ENCODE measurements at regions of chr6 and their contacts with region 1.

Region 1: DNA sequence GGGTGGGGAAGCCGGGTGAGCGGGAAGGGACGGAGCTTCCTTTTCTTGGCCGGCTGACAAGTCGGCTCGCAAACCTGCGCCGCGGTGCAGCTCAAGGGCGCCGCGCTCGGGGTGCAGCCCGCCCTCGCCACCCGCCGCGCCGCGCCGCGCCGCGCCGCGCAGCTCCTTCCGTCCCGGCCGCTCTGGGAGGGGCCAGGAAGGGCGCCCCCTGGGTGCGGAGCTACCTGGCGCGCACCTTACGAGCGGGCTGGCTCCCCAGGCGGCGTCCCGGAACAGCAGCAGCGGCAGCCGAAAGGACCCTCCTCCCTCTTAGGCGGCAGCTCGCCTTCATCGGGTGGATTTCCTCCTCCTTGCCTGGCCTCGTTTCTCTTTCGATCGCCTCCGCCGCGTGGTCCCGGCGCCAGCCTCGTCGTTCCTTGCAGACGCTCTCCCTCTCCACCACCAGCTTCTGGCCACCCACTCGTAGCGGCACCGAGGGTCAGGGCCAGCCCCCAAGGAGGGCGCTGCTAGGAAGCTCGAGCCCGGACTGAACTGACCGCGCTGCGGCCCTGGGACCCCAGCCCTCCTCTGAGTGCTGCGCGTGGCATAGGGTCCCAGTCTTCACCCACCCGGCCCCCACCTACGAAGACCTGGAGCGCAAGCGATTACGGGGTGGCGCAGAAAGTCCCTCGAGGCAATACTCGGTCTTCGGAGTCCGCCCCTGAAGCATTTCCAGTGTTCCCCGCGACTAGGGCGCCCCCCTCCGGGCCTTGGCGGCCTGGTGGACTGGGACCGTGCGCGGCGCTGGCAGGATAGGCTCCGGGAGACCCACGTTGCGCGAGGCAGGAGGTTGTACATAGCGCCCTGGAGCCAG is at the start of gene MAP3K5:
- DNase-seq: peak; percentile 85
- ATAC-seq: peak; percentile 74
- H3K4me3 ChIP-seq: peak within 1 kb of the TSS; percentile 95
- H3K27ac ChIP-seq: peak within 1 kb of the TSS; percentile 92
- H3K4me1 ChIP-seq: peaks cover 6% of the 10 kb centered on the region
- H3K27me3 ChIP-seq: no peaks in the 10 kb centered on the region
- CTCF ChIP-seq: peak; percentile 95
- POLR2A ChIP-seq: no peak; the same call in 1 of the 2 replicates
- RAD21 ChIP-seq: peak; percentile 91
- total RNA-seq, gene MAP3K5: 17.2 and 17.6 TPM in 2 replicates

Region 2: GRCh38 chr6:136344420-136344819 is 448.2 kb before region 1 on chr6:
- CTCF ChIA-PET with region 1: no interaction called
- POLR2A ChIA-PET with region 1: no interaction called
- dilution Hi-C with region 1: no loop called
- in situ Hi-C with region 1: no loop called
- intact Hi-C with region 1: loop called (anchors 10 kb)
- DNase-seq: peak; percentile 86
- ATAC-seq: peak; percentile 85
- H3K4me3 ChIP-seq: no peak overlapping the region
- H3K27ac ChIP-seq: no peak overlapping the region
- H3K4me1 ChIP-seq: no peaks in the 10 kb centered on the region
- H3K27me3 ChIP-seq: no peaks in the 10 kb centered on the region
- CTCF ChIP-seq: no peak
- POLR2A ChIP-seq: no peak
- RAD21 ChIP-seq: no peak

Region 3: GRCh38 chr6:136599329-136600011 is 193.2 kb before region 1 on chr6:
- CTCF ChIA-PET with region 1: interaction called, 10 read pairs
- POLR2A ChIA-PET with region 1: no interaction called
- dilution Hi-C with region 1: no loop called
- in situ Hi-C with region 1: loop called (anchors 5 kb)
- intact Hi-C with region 1: no loop called
- DNase-seq: peak; percentile 33
- ATAC-seq: no peak
- H3K4me3 ChIP-seq: no peak overlapping the region
- H3K27ac ChIP-seq: no peak overlapping the region
- H3K4me1 ChIP-seq: peaks cover 11% of the 10 kb centered on the region
- H3K27me3 ChIP-seq: no peaks in the 10 kb centered on the region
- CTCF ChIP-seq: no peak
- POLR2A ChIP-seq: no peak
- RAD21 ChIP-seq: no peak

Region 4: GRCh38 chr6:136624347-136624746 is 168.3 kb before region 1 on chr6:
- CTCF ChIA-PET with region 1: interaction called, 13 read pairs
- POLR2A ChIA-PET with region 1: no interaction called
- dilution Hi-C with region 1: no loop called
- in situ Hi-C with region 1: no loop called
- intact Hi-C with region 1: no loop called
- DNase-seq: peak; percentile 42
- ATAC-seq: peak; percentile 63
- H3K4me3 ChIP-seq: no peak overlapping the region
- H3K27ac ChIP-seq: no peak overlapping the region
- H3K4me1 ChIP-seq: peaks cover 14% of the 10 kb centered on the region
- H3K27me3 ChIP-seq: no peaks in the 10 kb centered on the region
- CTCF ChIP-seq: no peak
- POLR2A ChIP-seq: no peak
- RAD21 ChIP-seq: no peak

Region 5: GRCh38 chr6:136669299-136669699 is 123.3 kb before region 1 on chr6:
- CTCF ChIA-PET with region 1: interaction called, 6 read pairs
- POLR2A ChIA-PET with region 1: no interaction called
- dilution Hi-C with region 1: no loop called
- in situ Hi-C with region 1: no loop called
- intact Hi-C with region 1: loop called (anchors 5 kb)
- DNase-seq: peak; percentile 89
- ATAC-seq: peak; percentile 92
- H3K4me3 ChIP-seq: no peak overlapping the region
- H3K27ac ChIP-seq: no peak overlapping the region
- H3K4me1 ChIP-seq: no peaks in the 10 kb centered on the region
- H3K27me3 ChIP-seq: no peaks in the 10 kb centered on the region
- CTCF ChIP-seq: no peak
- POLR2A ChIP-seq: no peak
- RAD21 ChIP-seq: no peak

Measured in IMR-90 (cell line).